ENCODE measurements at regions of chr5 and their contacts with region 1.

Region 1: DNA sequence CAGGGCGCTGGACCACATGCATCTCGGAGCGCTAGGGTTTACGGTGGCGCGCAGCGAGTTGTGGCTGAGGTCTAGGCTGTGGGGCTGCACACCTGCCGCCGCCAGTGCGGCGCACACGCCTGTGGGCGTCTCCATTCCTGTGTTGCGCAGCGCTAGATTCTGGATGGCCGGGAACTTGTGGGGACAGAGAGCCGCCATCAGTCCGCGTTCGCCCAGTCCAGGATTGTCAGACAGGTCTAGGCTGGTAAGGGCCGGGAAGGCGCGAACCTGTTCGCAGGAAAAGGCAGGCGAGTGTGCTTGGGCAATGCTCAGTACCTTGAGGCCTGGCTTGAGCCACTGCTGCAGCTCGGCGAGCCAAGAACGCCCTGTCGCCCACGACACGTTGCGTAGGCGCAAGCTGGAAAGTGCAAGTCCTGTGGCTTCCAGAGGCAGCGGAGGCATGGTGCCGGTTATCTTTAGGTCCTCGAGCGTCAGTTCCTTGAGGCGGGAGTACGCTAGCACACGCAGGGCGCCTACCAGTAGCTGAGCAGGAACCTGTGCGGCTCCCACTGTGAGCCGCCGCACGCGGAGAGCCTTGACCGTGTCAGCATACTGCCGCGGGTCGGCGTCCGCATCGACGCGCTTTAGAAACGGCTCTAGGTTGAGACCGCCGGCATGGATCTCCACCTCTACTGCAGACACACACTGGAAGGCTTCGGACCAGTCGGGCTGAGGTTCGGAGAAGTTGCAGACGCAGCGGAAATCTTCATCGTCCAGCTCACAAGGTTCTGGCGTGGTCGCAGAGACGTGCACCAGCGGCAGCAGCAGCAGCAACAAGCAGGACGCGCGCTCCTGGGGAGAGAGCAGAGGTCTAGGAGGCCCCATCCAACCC is 590 bp downstream of the CD14 start:
- DNase-seq: peak; percentile 24 to 63 (median 43)
- H3K4me3 ChIP-seq: peak overlapping the region; percentile 74
- H3K4me3 Mint-ChIP-seq: peak overlapping the region; percentile 85 to 97 (median 91)
- H3K27ac ChIP-seq: no peak overlapping the region
- H3K27ac Mint-ChIP-seq: peak overlapping the region; percentile 33 to 91 (median 88)
- H3K4me1 ChIP-seq: peaks cover 6% of the 10 kb centered on the region
- H3K4me1 Mint-ChIP-seq: peaks cover 15 to 25% (median 25%) of the 10 kb centered on the region in 3 donors
- H3K27me3 ChIP-seq: no peaks in the 10 kb centered on the region
- H3K27me3 Mint-ChIP-seq: peaks cover 7 to 12% of the 10 kb centered on the region in 2 donors

Region 2: DNA sequence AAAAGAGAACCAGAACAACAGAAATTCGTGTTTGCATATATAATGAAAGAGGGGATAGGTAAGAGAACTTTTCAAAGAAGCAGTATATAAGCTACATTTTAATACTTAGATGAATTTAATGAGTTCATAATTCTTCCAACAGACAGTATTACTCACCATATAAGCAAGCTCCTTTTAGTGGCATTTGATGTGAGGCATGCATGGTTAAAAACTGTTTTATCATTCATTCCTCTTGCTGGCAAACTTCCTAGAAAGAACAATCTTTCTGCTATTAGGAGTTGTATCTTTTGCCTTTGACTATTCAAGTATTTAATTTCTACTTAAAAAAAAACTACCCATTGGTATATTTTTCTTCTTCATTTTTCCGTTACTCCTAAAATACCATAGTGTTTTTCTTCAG is 150.6 kb before region 1 on chr5:
- CTCF ChIA-PET with region 1: no interaction called
- POLR2A ChIA-PET with region 1: no interaction called
- DNase-seq: no peak
- H3K4me3 ChIP-seq: no peak overlapping the region
- H3K4me3 Mint-ChIP-seq: no peak overlapping the region
- H3K27ac ChIP-seq: no peak overlapping the region
- H3K27ac Mint-ChIP-seq: peak overlapping the region in 1 of 8 donors; percentile 14
- H3K4me1 ChIP-seq: no peaks in the 10 kb centered on the region
- H3K4me1 Mint-ChIP-seq: no peaks in the 10 kb centered on the region
- H3K27me3 ChIP-seq: no peaks in the 10 kb centered on the region
- H3K27me3 Mint-ChIP-seq: no peaks in the 10 kb centered on the region

Region 3: GRCh38 chr5:140609126-140609525 is 23.3 kb before region 1 on chr5:
- CTCF ChIA-PET with region 1: no interaction called
- POLR2A ChIA-PET with region 1: interaction called, 10 read pairs
- DNase-seq: no peak
- H3K4me3 ChIP-seq: no peak overlapping the region
- H3K4me3 Mint-ChIP-seq: no peak overlapping the region
- H3K27ac ChIP-seq: no peak overlapping the region
- H3K27ac Mint-ChIP-seq: peak overlapping the region in 1 of 8 donors; percentile 14
- H3K4me1 ChIP-seq: no peaks in the 10 kb centered on the region
- H3K4me1 Mint-ChIP-seq: peaks cover 0 to 3% (median 0%) of the 10 kb centered on the region in 3 donors
- H3K27me3 ChIP-seq: no peaks in the 10 kb centered on the region
- H3K27me3 Mint-ChIP-seq: peaks cover 7 to 26% of the 10 kb centered on the region in 2 donors

Region 4: DNA sequence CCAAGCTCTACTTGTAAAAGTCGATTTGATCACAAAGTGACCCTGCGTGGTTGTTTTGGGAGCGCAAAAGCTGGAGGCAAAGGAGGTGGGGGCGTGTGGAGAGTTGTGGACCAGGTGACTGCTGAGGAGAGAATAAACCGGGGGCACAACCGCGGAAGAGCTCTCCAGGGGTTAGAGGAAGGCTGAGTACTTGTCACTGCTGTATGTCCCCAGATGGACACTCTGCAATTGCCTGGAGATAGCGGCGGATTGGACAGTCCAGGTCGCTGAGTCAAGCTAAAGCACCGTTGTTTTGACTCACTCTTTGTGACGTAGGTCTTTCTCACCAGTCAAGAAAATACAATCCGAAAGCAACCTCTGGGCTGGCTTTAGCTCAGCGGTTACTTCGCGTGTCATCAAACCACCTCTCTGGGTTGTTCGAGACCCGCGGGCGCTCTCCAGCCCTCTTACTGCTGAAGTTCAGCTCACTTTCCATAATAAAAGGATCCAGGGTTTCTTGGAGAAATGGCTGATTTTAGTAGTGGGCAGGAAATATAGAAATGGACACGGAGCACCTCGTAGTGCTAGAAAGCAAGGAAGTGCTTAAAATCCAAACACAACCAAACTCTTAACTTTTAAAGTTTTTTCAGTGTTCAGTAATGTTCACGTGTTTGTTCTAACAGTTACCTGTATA is 93.5 kb after region 1 on chr5:
- CTCF ChIA-PET with region 1: no interaction called
- POLR2A ChIA-PET with region 1: no interaction called
- DNase-seq: peak; percentile 43 to 75 (median 52)
- H3K4me3 ChIP-seq: peak overlapping the region; percentile 20
- H3K4me3 Mint-ChIP-seq: peak overlapping the region; percentile 67 to 83 (median 79)
- H3K27ac ChIP-seq: peak overlapping the region; percentile 61
- H3K27ac Mint-ChIP-seq: peak overlapping the region; percentile 0 to 89 (median 75)
- H3K4me1 ChIP-seq: no peaks in the 10 kb centered on the region
- H3K4me1 Mint-ChIP-seq: peaks cover 13 to 23% (median 21%) of the 10 kb centered on the region in 3 donors
- H3K27me3 ChIP-seq: no peaks in the 10 kb centered on the region
- H3K27me3 Mint-ChIP-seq: peaks cover 7 to 15% of the 10 kb centered on the region in 2 donors

Measured in CD8-positive, alpha-beta memory T cell (primary cell).